Posterior cingulate gyrus (tissue), 11 donors: ENCODE measurements at regions of chr9 and their contacts with region 1.

Region 1: GRCh38 chr9:128504485-128505413 is at the start of gene GLE1:
- DNase-seq: peak; percentile 93 to 99 (median 96)

Region 2: DNA sequence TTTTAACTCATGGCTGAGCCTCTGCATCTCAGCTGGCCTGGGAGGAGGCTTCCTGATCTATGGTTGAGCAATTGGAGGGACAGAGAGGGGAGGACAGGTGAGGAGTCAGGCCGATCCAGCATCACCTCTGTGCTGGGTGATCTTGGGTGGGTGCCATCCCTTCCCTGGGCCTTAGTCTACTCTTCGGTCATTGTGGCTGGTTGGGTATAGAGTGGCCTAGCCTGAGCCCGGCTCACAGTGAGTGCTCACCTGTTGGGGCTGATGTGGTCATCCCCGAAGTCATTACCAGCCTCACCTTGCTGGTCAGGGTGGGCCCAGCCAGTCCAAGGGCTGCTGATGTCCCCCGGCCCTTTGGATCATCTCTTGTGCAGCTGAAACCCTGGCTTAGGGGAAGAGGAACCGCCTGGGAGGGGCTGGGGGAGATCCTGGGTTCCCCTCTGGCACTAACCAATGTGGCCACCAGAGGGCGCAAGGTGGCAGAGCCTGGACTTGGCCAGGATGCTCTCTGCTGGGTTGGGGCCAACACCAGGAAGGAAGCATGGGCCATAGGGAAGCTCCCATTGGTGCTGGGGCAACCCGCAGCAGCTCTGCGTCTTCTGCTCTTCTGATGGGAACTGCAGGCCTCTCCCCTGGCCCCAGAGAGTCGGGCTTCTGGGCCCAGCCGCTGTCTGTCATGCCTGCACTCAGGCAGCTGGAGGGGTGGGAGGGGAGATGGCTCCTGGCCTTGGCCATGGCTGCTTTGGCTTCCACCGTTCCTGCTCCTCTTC is 66.2 kb before region 1 on chr9:
- intact Hi-C with region 1: no loop called
- DNase-seq: peak; percentile 59 to 97 (median 86)

Region 3: GRCh38 chr9:128552153-128552743 is 47.5 kb after region 1 on chr9 and contains the start of gene SPTAN1:
- intact Hi-C with region 1: loop called (anchors 5 kb)
- DNase-seq: peak; percentile 85 to 99 (median 90)

Region 4: DNA sequence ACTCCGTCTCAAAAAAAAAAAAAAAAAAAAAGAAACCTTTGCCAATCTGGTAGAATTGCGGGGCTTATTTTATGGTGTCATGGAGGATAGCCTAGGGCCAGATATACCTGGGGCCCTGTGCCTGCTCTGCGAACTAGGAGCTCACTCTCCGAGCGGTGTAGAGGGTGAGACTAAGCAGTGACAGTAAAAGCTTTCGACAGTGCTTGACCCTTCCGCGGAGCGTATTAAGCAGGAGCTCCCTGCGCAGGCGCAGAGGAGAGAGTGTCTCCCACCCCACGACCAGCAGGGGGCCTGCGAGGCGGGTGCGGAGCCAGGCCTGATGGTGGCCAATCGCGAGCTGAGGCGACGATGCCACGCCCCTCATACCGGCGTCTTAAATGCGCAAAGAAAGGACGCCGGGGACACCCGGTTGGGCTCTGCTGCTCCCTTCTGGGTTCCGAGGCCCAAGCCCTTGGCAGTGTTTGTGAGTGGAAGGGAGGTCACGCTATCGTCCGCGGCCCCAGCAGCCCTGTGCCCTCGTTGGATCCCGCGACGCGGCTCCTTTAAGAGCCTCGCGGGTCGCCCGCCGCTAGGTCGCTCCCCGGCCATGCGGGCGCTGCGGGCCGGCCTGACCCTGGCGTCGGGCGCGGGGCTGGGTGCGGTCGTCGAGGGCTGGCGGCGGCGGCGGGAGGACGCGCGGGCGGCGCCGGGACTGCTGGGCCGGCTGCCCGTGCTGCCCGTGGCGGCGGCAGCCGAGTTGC is 313.5 kb after region 1 on chr9 and contains the start of gene ENDOG:
- intact Hi-C with region 1: no loop called
- DNase-seq: peak; percentile 97 to 100 (median 98)